ENCODE measurements at regions of chr11 and their contacts with region 1.

Region 1: GRCh38 chr11:63738720-63739360 is 29.7 kb downstream of the ZFTA start:
- DNase-seq: peak; percentile 96
- ATAC-seq: peak; percentile 73
- H3K4me3 ChIP-seq: no peak overlapping the region
- H3K27ac ChIP-seq: no peak overlapping the region
- H3K4me1 ChIP-seq: no peaks in the 10 kb centered on the region
- H3K27me3 ChIP-seq: no peaks in the 10 kb centered on the region
- CTCF ChIP-seq: peak; percentile 85

Region 2: GRCh38 chr11:63671322-63672155 is 67.3 kb before region 1 on chr11 and contains the start of gene ATL3:
- CTCF ChIA-PET with region 1: interaction called, 11 read pairs
- POLR2A ChIA-PET with region 1: no interaction called
- intact Hi-C with region 1: loop called (anchors 1 kb)
- DNase-seq: peak; percentile 96
- ATAC-seq: peak; percentile 60
- H3K4me3 ChIP-seq: peak within 1 kb of the TSS; percentile 72
- H3K27ac ChIP-seq: peak within 1 kb of the TSS; percentile 81
- H3K4me1 ChIP-seq: peaks cover 50% of the 10 kb centered on the region
- H3K27me3 ChIP-seq: no peaks in the 10 kb centered on the region
- CTCF ChIP-seq: no peak
- total RNA-seq, gene ATL3: 47.2 and 51.0 TPM in 2 replicates

Region 3: GRCh38 chr11:63681321-63682049 is 57.4 kb before region 1 on chr11 and contains the start of gene RTN3:
- CTCF ChIA-PET with region 1: interaction called, 7 read pairs
- POLR2A ChIA-PET with region 1: no interaction called
- intact Hi-C with region 1: loop called (anchors 2 kb)
- DNase-seq: peak; percentile 100
- ATAC-seq: peak; percentile 89
- H3K4me3 ChIP-seq: peak within 1 kb of the TSS; percentile 85
- H3K27ac ChIP-seq: peak within 1 kb of the TSS; percentile 49
- H3K4me1 ChIP-seq: peaks cover 14% of the 10 kb centered on the region
- H3K27me3 ChIP-seq: no peaks in the 10 kb centered on the region
- CTCF ChIP-seq: no peak
- total RNA-seq, gene RTN3: 100 and 133 TPM in 2 replicates

Region 4: GRCh38 chr11:63888170-63889086 is 149.6 kb after region 1 on chr11:
- CTCF ChIA-PET with region 1: no interaction called
- POLR2A ChIA-PET with region 1: no interaction called
- intact Hi-C with region 1: no loop called
- DNase-seq: peak; percentile 86
- ATAC-seq: peak; percentile 71
- H3K4me3 ChIP-seq: peak overlapping the region; percentile 64
- H3K27ac ChIP-seq: peak overlapping the region; percentile 88
- H3K4me1 ChIP-seq: peaks cover 28% of the 10 kb centered on the region
- H3K27me3 ChIP-seq: no peaks in the 10 kb centered on the region
- CTCF ChIP-seq: no peak

Measured in PC-3 (cell line).